ENCODE measurements at regions of chr20 and their contacts with region 1.

Region 1: GRCh38 chr20:20860078-20860806 is 147.8 kb upstream of the RALGAPA2 start:
- DNase-seq: peak; percentile 72
- H3K4me3 ChIP-seq: no peak overlapping the region
- H3K27ac ChIP-seq: no peak overlapping the region
- H3K4me1 ChIP-seq: no peaks in the 10 kb centered on the region
- H3K27me3 ChIP-seq: no peaks in the 10 kb centered on the region
- CTCF ChIP-seq: peak; percentile 93 to 98

Region 2: DNA sequence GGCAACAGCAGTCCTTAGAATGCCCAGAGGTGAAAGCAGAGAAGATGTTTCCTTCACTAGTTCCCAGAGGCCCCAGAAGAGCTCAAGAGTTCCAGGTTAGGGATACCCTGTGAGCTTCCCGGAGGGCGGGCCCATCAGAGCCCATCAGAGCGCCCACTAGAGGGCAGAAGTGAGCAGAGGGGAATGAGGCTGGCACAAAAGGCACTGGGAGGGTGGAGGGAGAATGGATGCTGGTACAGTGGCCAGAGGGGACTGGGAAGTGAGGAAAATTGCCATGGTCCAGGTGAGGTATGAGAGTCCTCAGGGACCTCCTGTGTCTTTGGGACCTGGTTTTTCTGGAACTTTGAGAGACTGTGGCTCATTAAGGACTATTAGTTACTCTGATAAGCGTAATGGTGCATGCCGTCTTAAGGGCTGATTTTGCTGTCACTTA is 188.6 kb after region 1 on chr20:
- CTCF ChIA-PET with region 1: no interaction called
- dilution Hi-C with region 1: no loop called
- in situ Hi-C with region 1: no loop called
- intact Hi-C with region 1: loop called (anchors 5 kb)
- DNase-seq: no peak
- H3K4me3 ChIP-seq: no peak overlapping the region
- H3K27ac ChIP-seq: no peak overlapping the region
- H3K4me1 ChIP-seq: no peaks in the 10 kb centered on the region
- H3K27me3 ChIP-seq: no peaks in the 10 kb centered on the region
- CTCF ChIP-seq: peak; percentile 82 to 87

Region 3: GRCh38 chr20:21125849-21126580 is 265.8 kb after region 1 on chr20 and contains the start of gene KIZ:
- CTCF ChIA-PET with region 1: no interaction called
- dilution Hi-C with region 1: no loop called
- in situ Hi-C with region 1: no loop called
- intact Hi-C with region 1: loop called (anchors 10 kb)
- DNase-seq: peak; percentile 93
- H3K4me3 ChIP-seq: peak within 1 kb of the TSS; percentile 70 to 86 (median 79)
- H3K27ac ChIP-seq: peak within 1 kb of the TSS; percentile 57
- H3K4me1 ChIP-seq: peaks cover 7% of the 10 kb centered on the region
- H3K27me3 ChIP-seq: no peaks in the 10 kb centered on the region
- CTCF ChIP-seq: peak; percentile 28 to 45
- total RNA-seq, gene KIZ: 18.3 to 56.1 TPM

Region 4: DNA sequence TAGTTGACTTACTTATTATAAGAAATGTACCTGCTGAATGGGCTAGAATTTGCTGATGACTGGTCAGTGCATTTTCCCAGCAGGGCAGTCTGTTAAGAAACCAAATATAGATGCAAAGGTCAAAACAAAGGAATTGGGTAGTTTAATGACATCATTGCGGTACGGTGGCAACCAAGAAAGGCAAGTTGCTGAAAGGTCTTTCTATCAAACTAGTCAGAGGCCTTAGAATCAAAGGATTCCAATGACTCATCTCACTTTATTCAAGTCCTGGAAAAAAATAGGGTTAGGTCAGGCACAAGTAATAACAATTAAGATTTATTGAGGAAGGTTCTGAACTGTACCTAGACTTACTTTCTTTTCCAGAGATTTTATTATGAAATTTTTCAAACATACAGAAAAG is 342.0 kb after region 1 on chr20:
- CTCF ChIA-PET with region 1: no interaction called
- dilution Hi-C with region 1: no loop called
- in situ Hi-C with region 1: loop called in 1 of 2 experiments (anchors 25 kb)
- intact Hi-C with region 1: no loop called
- DNase-seq: peak; percentile 17
- H3K4me3 ChIP-seq: no peak overlapping the region
- H3K27ac ChIP-seq: no peak overlapping the region
- H3K4me1 ChIP-seq: no peaks in the 10 kb centered on the region
- H3K27me3 ChIP-seq: no peaks in the 10 kb centered on the region
- CTCF ChIP-seq: no peak

Region 5: DNA sequence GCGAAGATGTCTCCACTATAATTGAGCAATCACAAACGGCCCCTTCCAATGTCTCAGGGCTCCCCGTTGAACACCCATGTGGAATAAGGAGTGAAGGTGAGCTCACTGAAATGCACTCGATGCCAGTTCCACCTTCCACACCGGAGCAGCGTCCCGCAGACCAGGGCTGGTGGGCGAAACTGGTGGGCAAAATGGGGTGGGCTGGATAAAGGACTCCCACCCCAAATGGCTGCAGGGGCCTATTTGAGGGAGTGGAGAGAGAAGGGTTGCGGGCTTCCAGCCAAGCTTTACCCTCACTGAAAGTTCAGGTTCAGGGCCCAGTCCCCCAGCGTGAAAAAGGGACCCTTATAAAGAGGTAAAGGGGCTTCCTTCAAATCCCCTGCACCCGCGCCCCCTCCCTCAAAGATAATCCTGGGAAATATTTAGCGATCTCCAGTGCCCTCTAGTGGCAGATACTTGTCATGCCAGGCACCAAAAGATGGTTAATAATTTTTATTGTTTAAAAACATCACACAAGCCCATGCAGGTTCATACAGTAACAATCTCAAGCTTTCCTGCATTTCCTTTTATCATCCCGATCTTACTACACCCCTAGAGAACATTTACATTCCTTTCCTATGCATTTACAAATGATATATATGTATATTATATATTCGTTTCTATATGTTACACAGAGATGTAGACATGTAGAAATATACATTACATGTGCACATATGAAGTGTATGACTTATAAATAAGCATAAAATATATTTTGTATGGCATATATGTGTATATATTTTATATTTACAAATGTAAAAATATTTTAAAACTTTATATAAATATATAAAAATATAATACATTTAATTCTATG is 711.8 kb after region 1 on chr20:
- CTCF ChIA-PET with region 1: no interaction called
- dilution Hi-C with region 1: no loop called
- in situ Hi-C with region 1: no loop called
- intact Hi-C with region 1: loop called (anchors 2 kb)
- DNase-seq: no peak
- H3K4me3 ChIP-seq: no peak overlapping the region
- H3K27ac ChIP-seq: no peak overlapping the region
- H3K4me1 ChIP-seq: peaks cover 4% of the 10 kb centered on the region
- H3K27me3 ChIP-seq: no peaks in the 10 kb centered on the region
- CTCF ChIP-seq: peak; percentile 76 to 77

Region 6: DNA sequence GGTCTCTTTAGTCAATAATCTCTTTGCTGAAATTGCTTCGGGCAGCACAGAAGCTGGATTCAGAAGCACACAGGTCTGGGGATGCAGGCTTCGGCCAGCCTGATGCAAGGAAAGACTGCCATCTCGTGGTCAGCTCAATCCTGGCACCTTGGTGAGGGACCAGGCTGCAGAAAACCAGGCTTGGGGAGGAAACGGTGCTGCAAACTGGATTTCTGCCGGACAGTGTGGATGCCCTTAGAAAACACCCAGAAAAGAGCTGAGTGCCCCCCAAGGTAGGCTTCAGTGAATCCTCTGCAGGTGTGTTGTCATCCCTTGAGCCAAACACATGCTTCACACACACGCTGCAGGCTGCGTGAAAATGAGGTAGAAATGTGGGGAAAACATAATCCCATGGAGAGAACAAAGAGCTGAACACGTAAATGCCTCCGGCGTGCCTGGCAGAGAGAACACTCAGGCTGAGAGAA is 755.4 kb after region 1 on chr20:
- CTCF ChIA-PET with region 1: no interaction called
- dilution Hi-C with region 1: no loop called
- in situ Hi-C with region 1: no loop called
- intact Hi-C with region 1: loop called (anchors 1 kb)
- DNase-seq: peak; percentile 43
- H3K4me3 ChIP-seq: no peak overlapping the region
- H3K27ac ChIP-seq: no peak overlapping the region
- H3K4me1 ChIP-seq: no peaks in the 10 kb centered on the region
- H3K27me3 ChIP-seq: peaks cover 2% of the 10 kb centered on the region
- CTCF ChIP-seq: peak; percentile 87 to 95

Measured in mammary epithelial cell (primary cell).